H1 (cell line): ENCODE measurements at regions of chr10 and their contacts with region 1.

Region 1: DNA sequence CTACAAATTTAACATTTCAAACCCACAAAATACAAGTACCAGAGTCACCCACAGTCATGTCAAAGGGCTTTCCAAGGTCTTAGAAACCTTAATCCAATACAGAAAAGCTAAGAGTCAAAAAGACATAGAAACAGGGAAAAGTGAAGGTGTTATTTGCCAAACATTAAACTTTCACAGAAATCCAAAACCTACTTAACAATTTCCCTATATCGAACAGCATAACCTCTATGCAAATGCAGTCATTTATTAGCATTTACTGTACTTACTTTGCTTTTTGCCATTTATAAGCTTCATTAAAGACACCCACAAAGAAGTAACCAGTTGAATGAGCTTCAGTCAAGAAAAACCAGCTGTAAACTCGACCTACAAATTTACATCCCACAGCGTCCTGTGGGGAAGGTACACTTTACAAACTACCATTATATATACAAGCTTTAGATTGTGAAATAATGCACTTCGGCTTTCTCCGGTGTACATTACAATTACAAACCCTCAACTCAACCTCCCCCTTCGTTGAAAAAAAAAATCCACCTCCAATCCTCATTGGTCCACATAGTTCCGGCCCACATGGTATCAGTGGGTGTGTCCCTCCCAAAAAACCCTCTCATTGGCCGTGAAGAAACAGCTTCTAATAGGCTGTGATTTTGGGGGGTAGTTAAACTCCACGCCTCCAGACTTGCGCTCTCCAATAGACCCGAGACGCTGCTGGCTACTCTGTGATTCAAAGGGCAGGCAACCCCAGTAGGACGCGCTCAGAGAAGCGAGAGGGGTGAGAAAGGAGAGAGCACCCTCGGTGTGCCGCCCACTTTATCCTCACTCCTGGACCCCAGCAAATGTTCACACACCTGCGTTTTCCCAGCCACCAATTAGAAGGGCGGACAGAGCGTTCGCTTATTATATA is 1.4 kb downstream of the PANK1 start:
- DNase-seq: peak in 1 of 2 experiments; percentile 88
- H3K4me3 ChIP-seq: peak overlapping the region; percentile 84 to 93 (median 90)
- H3K27ac ChIP-seq: peak overlapping the region; percentile 88
- H3K4me1 ChIP-seq: peaks cover 2 to 13% (median 10%) of the 10 kb centered on the region in 4 experiments; a peak in 6 of 7 replicates
- H3K27me3 ChIP-seq: no peaks in the 10 kb centered on the region
- CTCF ChIP-seq: no peak
- EP300 ChIP-seq: no peak
- POLR2A ChIP-seq: peak; percentile 97 to 100
- RAD21 ChIP-seq: no peak

Region 2: DNA sequence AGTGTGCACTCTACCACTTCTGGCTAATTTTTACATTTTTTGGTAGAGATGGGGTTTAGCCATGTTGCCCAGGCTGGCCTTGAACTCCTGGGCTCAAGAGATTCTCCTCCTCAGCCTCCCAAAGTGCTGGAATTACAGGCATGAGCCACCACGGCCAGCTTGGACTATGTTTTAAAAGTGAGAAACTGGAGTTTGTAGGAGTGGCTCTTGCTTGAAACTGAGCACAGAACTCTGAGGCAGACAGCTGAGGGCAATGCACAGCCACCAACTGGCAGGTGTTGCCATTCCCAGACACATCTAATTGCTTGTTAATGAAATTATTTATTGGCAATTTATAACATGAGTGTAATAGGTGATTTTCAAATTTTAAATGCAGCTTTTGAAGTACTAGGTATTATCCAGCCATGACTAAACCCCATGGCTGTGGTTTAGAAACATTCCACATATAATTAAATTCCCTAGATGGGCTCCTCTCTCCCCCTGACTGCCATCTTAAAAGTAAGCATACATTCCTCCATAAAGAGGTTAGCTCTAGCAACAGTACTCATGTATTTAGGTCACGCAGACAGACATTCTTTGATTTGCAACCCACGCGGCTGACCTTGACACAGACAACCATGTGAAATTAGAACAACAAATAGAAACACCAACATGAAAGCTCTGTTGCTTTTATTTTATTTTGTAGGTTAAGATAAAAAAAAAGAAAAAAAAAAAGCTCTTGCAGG is 18.5 kb before region 1 on chr10:
- CTCF ChIA-PET with region 1: interaction called, 8 read pairs
- POLR2A ChIA-PET with region 1: interaction called, 79 read pairs
- DNase-seq: no peak
- H3K4me3 ChIP-seq: no peak overlapping the region
- H3K27ac ChIP-seq: no peak overlapping the region; the same call in 1 of the 2 replicates
- H3K4me1 ChIP-seq: 0 out of 7 replicates have a peak, but pooled peaks cover 0 to 2% (median 0%) of the 10 kb centered on the region in 4 experiments
- H3K27me3 ChIP-seq: no peaks in the 10 kb centered on the region
- CTCF ChIP-seq: no peak
- EP300 ChIP-seq: no peak
- POLR2A ChIP-seq: no peak
- RAD21 ChIP-seq: no peak

Region 3: GRCh38 chr10:89633484-89633883 is 10.2 kb before region 1 on chr10:
- CTCF ChIA-PET with region 1: interaction called, 8 read pairs
- POLR2A ChIA-PET with region 1: interaction called, 79 read pairs
- DNase-seq: no peak
- H3K4me3 ChIP-seq: no peak overlapping the region
- H3K27ac ChIP-seq: no peak overlapping the region
- H3K4me1 ChIP-seq: no peaks in the 10 kb centered on the region
- H3K27me3 ChIP-seq: no peaks in the 10 kb centered on the region; a peak in 1 of 7 replicates
- CTCF ChIP-seq: no peak
- EP300 ChIP-seq: no peak
- POLR2A ChIP-seq: no peak
- RAD21 ChIP-seq: no peak

Region 4: DNA sequence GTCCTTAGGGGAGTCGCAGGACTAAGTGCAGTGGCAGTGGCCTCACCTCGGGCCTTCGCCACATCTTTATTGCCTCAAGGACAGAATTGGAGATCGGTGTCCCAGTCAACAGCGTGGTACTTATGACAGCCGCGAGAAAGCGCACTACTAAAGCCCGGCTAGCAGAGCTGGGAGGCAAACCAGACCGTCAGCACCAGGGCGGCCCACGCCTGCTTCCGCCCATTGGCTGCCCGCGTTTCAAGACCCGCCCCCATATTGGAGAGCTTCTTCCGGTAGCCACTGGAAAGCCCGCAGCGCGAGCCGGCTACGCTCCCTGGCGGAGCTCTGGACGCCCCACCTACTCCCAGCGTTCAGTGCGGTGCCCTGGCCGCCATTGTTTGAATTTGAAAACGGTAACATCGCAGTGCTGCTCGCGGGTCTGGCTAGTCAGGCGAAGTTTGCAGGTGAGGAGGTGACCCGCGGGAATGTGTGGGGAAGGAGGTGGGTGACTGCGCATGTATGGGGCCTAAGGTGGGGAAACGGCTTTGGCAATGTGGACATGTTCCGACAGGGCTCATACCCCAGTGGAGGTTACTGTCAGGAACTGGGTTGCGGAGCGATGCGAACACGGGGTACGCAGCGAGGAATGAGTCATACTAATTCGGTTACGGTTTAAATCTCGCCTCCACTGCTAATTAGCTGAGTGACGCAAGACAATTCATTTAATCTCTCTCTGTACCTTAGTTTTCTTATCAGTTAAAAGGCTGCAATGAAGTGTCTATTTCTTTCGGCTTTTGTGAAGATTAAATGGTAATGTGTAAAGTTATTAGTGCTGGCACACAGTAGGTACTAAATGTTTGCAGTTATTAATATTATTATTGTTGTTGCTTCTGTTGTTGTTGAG is 57.8 kb after region 1 on chr10 and contains the start of gene KIF20B:
- CTCF ChIA-PET with region 1: interaction called, 3 read pairs
- POLR2A ChIA-PET with region 1: interaction called, 36 read pairs
- DNase-seq: peak; percentile 91 to 92
- H3K4me3 ChIP-seq: peak within 1 kb of the TSS; percentile 89 to 100 (median 100)
- H3K27ac ChIP-seq: peak within 1 kb of the TSS; percentile 87
- H3K4me1 ChIP-seq: peaks cover 0 to 4% (median under 1%) of the 10 kb centered on the region in 4 experiments; a peak in 2 of 7 replicates
- H3K27me3 ChIP-seq: no peaks in the 10 kb centered on the region
- CTCF ChIP-seq: peak in 1 of 3 experiments; percentile 22; a peak in 1 of 4 replicates
- EP300 ChIP-seq: peak in 1 of 2 experiments; percentile 37; a peak in 1 of 3 replicates
- POLR2A ChIP-seq: peak; percentile 69 to 95
- RAD21 ChIP-seq: peak; percentile 41 to 56
- total RNA-seq, gene KIF20B: 70.8 and 72.0 TPM in 2 replicates